ENCODE measurements at regions of chr1 and their contacts with region 1.

Region 1: GRCh38 chr1:174982971-174983689 is 16.6 kb upstream of the CACYBP start:
- DNase-seq: peak; percentile 75
- H3K4me3 Mint-ChIP-seq: no peak overlapping the region
- H3K27ac Mint-ChIP-seq: no peak overlapping the region
- H3K4me1 Mint-ChIP-seq: no peaks in the 10 kb centered on the region
- H3K27me3 Mint-ChIP-seq: no peaks in the 10 kb centered on the region
- CTCF ChIP-seq: peak; percentile 57

Region 2: DNA sequence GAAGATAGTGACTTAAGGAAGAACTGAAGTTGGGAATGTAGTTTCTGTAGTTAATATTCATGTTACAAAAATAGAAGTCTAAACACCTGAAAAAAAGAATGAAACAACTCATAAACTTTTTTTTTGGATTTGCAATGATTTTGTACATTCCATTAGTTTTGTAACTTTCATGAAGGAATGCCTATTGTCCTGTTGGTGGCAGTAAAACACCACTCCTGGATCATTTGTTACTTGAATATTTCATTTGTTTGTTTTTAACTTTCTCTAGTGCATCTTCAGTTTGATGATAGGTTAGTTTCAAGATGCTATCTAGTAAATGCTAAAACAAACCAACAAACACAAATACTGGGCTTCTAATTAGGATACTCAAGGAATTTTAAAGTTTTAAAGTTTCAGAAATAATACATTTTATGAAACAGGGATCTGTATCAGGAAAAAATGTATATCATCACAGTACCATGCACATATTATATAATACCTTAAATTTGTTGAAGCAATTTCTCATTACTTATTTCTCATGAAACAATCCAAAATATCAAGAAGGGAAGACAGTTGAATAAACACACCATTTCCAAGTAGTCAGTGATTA is 213.1 kb before region 1 on chr1:
- CTCF ChIA-PET with region 1: interaction called, 76 read pairs
- POLR2A ChIA-PET with region 1: interaction called, 4 read pairs
- intact Hi-C with region 1: loop called (anchors 1 kb)
- DNase-seq: peak; percentile 78
- H3K4me3 Mint-ChIP-seq: no peak overlapping the region
- H3K27ac Mint-ChIP-seq: no peak overlapping the region
- H3K4me1 Mint-ChIP-seq: no peaks in the 10 kb centered on the region
- H3K27me3 Mint-ChIP-seq: no peaks in the 10 kb centered on the region
- CTCF ChIP-seq: peak; percentile 80

Region 3: GRCh38 chr1:174786760-174787159 is 196.4 kb before region 1 on chr1:
- CTCF ChIA-PET with region 1: interaction called, 10 read pairs
- POLR2A ChIA-PET with region 1: interaction called, 4 read pairs
- intact Hi-C with region 1: no loop called
- DNase-seq: no peak
- H3K4me3 Mint-ChIP-seq: no peak overlapping the region
- H3K27ac Mint-ChIP-seq: no peak overlapping the region
- H3K4me1 Mint-ChIP-seq: peaks cover 7% of the 10 kb centered on the region
- H3K27me3 Mint-ChIP-seq: no peaks in the 10 kb centered on the region
- CTCF ChIP-seq: no peak

Region 4: GRCh38 chr1:174794861-174795260 is 188.3 kb before region 1 on chr1:
- CTCF ChIA-PET with region 1: interaction called, 13 read pairs
- POLR2A ChIA-PET with region 1: interaction called, 5 read pairs
- intact Hi-C with region 1: no loop called
- DNase-seq: no peak
- H3K4me3 Mint-ChIP-seq: no peak overlapping the region
- H3K27ac Mint-ChIP-seq: no peak overlapping the region
- H3K4me1 Mint-ChIP-seq: peaks cover 9% of the 10 kb centered on the region
- H3K27me3 Mint-ChIP-seq: no peaks in the 10 kb centered on the region
- CTCF ChIP-seq: no peak

Region 5: DNA sequence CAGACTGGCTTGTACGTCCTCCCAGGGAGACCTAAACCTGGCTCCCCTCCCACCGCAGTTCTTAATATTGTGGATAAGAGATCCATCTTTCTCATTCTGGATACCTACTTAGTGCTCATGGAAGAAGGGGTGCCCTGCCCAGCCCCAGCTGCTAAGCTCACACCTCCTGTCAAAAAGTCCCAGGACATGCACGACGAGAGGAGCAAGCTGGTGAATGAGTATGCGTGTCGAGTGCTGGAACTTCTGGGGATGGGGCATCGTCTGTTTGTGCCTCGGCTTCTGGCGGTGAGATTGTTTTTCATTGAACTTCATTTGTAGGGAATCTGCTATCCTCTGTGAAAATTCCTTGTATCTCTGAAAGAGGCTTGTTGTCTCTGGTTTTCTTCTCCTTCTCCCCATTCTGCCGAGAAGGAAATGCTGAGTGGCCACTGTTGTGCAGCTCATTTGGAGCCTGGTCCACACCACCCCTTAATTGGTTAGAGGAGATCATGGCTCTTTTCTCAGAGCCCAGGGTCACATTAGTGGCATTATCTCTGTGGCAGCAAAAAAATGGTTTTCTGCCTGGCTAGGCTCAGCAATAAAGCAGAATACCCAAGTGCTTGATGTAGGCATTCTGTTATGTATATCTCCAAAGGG is 182.8 kb before region 1 on chr1:
- CTCF ChIA-PET with region 1: interaction called, 13 read pairs
- POLR2A ChIA-PET with region 1: interaction called, 5 read pairs
- intact Hi-C with region 1: no loop called
- DNase-seq: no peak
- H3K4me3 Mint-ChIP-seq: no peak overlapping the region
- H3K27ac Mint-ChIP-seq: no peak overlapping the region
- H3K4me1 Mint-ChIP-seq: peaks cover 8% of the 10 kb centered on the region
- H3K27me3 Mint-ChIP-seq: no peaks in the 10 kb centered on the region
- CTCF ChIP-seq: no peak

Region 6: GRCh38 chr1:174968750-174969244 is 14.3 kb before region 1 on chr1:
- CTCF ChIA-PET with region 1: interaction called, 40 read pairs
- POLR2A ChIA-PET with region 1: interaction called, 4 read pairs
- intact Hi-C with region 1: no loop called
- DNase-seq: peak; percentile 60
- H3K4me3 Mint-ChIP-seq: no peak overlapping the region
- H3K27ac Mint-ChIP-seq: no peak overlapping the region
- H3K4me1 Mint-ChIP-seq: peaks cover 22% of the 10 kb centered on the region
- H3K27me3 Mint-ChIP-seq: no peaks in the 10 kb centered on the region
- CTCF ChIP-seq: no peak

Region 7: GRCh38 chr1:175009532-175009931 is 26.4 kb after region 1 on chr1:
- CTCF ChIA-PET with region 1: no interaction called
- POLR2A ChIA-PET with region 1: no interaction called
- intact Hi-C with region 1: no loop called
- DNase-seq: no peak
- H3K4me3 Mint-ChIP-seq: no peak overlapping the region
- H3K27ac Mint-ChIP-seq: peak overlapping the region; percentile 29
- H3K4me1 Mint-ChIP-seq: peaks cover 12% of the 10 kb centered on the region
- H3K27me3 Mint-ChIP-seq: no peaks in the 10 kb centered on the region
- CTCF ChIP-seq: no peak

Measured in MCF 10A (cell line).